MCF 10A (cell line): ENCODE measurements at regions of chr16 and their contacts with region 1.

Region 1: GRCh38 chr16:2905431-2906387 is 6.0 kb upstream of the FLYWCH1 start:
- DNase-seq: peak; percentile 99
- H3K4me3 Mint-ChIP-seq: peak overlapping the region; percentile 84
- H3K27ac Mint-ChIP-seq: peak overlapping the region; percentile 91
- H3K4me1 Mint-ChIP-seq: peaks cover 17% of the 10 kb centered on the region
- H3K27me3 Mint-ChIP-seq: no peaks in the 10 kb centered on the region
- CTCF ChIP-seq: no peak

Region 2: GRCh38 chr16:2811703-2812471 is 93.8 kb before region 1 on chr16:
- CTCF ChIA-PET with region 1: no interaction called
- POLR2A ChIA-PET with region 1: no interaction called
- intact Hi-C with region 1: no loop called
- DNase-seq: no peak
- H3K4me3 Mint-ChIP-seq: no peak overlapping the region
- H3K27ac Mint-ChIP-seq: no peak overlapping the region
- H3K4me1 Mint-ChIP-seq: no peaks in the 10 kb centered on the region
- H3K27me3 Mint-ChIP-seq: peaks cover 28% of the 10 kb centered on the region
- CTCF ChIP-seq: no peak

Region 3: GRCh38 chr16:2838928-2839327 is 66.8 kb before region 1 on chr16:
- CTCF ChIA-PET with region 1: no interaction called
- POLR2A ChIA-PET with region 1: no interaction called
- intact Hi-C with region 1: loop called (anchors 5 kb)
- DNase-seq: peak; percentile 69
- H3K4me3 Mint-ChIP-seq: no peak overlapping the region
- H3K27ac Mint-ChIP-seq: no peak overlapping the region
- H3K4me1 Mint-ChIP-seq: peaks cover 31% of the 10 kb centered on the region
- H3K27me3 Mint-ChIP-seq: no peaks in the 10 kb centered on the region
- CTCF ChIP-seq: peak; percentile 80

Region 4: GRCh38 chr16:2883027-2883851 is 22.5 kb before region 1 on chr16 and contains the start of gene FLYWCH2:
- CTCF ChIA-PET with region 1: interaction called, 5 read pairs
- POLR2A ChIA-PET with region 1: interaction called, 75 read pairs
- intact Hi-C with region 1: no loop called
- DNase-seq: peak; percentile 96
- H3K4me3 Mint-ChIP-seq: peak within 1 kb of the TSS; percentile 77
- H3K27ac Mint-ChIP-seq: peak within 1 kb of the TSS; percentile 73
- H3K4me1 Mint-ChIP-seq: peaks cover 5% of the 10 kb centered on the region
- H3K27me3 Mint-ChIP-seq: no peaks in the 10 kb centered on the region
- CTCF ChIP-seq: no peak
- total RNA-seq, gene FLYWCH2: 24.4 and 27.7 TPM in 2 replicates